ENCODE measurements at regions of chr12 and their contacts with region 1.

Region 1: DNA sequence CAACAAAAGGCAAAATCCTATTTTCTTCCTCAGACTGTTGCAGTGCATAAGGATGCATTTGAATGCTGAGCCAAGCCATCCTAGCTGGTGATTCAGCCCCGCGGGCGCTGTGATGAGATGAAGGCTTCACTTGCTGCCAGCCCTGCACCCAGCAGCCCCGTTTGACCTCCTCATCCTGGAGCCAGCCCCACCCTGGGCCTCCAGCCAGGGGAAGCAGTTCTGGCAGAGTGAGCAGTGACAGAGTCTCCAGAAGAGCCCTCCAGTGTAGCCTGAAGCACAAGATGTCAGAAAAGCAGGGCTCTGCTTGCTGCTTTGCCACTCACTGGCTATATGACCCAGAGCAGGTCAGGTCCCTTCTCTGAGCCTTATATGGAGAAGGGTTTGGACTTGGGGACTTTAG is 96.2 kb upstream of the HSPB8 start:
- DNase-seq: peak; percentile 61
- ATAC-seq: peak; percentile 70 to 98

Region 2: DNA sequence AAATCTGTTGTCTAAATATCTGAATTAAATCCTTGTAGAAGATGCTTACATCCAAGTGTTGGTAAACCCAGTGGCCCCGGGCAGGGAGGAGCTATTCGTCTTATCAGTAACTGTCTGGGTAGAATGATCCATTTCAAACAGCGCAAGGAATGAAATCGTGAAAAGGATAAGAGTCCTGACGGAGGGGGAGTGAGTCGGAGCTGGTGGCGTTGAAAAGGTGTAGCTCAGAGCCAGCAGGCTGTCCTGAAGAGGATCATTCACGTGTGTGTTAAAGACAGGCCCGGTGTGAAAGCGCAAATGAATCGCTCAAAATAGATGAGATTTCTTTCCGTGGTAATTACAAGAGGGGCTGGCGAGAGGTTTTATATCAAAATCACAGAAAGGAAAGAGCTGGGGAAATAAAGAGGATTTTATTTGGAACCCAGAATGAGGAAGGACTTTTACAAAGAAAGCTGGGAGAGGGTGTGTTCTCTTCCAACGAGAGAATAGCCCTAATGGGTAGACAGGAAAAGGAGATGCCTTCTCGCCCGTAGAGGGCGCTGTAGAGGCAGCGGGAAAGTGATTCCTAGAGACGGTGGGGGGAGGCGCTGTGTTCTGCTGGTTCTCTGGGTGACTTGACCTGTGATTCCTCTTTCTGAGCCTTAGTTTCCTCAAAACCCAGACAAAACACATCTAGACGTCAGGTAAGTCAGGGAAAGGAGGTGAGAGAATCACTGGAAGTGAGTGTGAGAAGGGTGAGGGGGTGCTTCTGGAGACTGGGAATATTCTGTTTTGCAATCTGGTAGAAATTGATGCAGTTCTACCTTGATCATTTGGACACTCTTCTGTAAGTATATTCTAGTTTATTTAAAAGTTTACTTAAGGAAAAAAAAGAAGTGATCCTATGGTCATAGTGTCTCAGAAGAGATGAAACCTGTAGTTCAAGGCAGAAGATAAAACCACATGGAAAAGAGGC is 61.8 kb before region 1 on chr12:
- intact Hi-C with region 1: loop called in 1 of 2 experiments (anchors 2 kb)
- DNase-seq: peak; percentile 56
- ATAC-seq: peak in 1 of 2 donors; percentile 56

Region 3: GRCh38 chr12:119283310-119283709 is 200.8 kb after region 1 on chr12:
- intact Hi-C with region 1: no loop called
- DNase-seq: no peak
- ATAC-seq: no peak

Measured in left cardiac atrium (tissue), 4 donors.